ENCODE measurements at regions of chr5 and their contacts with region 1.

Region 1: GRCh38 chr5:150640311-150641005 is at the start of gene SYNPO:
- DNase-seq: peak; percentile 49
- H3K4me3 Mint-ChIP-seq: peak within 1 kb of the TSS; percentile 19
- H3K27ac Mint-ChIP-seq: peak within 1 kb of the TSS; percentile 58
- H3K4me1 Mint-ChIP-seq: peaks cover 74% of the 10 kb centered on the region
- H3K27me3 Mint-ChIP-seq: no peaks in the 10 kb centered on the region
- CTCF ChIP-seq: no peak
- total RNA-seq, gene SYNPO: 0.92 and 2.5 TPM in 2 replicates

Region 2: GRCh38 chr5:150398722-150399523 is 241.5 kb before region 1 on chr5:
- CTCF ChIA-PET with region 1: no interaction called
- intact Hi-C with region 1: no loop called
- DNase-seq: no peak
- H3K4me3 Mint-ChIP-seq: no peak overlapping the region
- H3K27ac Mint-ChIP-seq: no peak overlapping the region
- H3K4me1 Mint-ChIP-seq: no peaks in the 10 kb centered on the region
- H3K27me3 Mint-ChIP-seq: no peaks in the 10 kb centered on the region
- CTCF ChIP-seq: peak; percentile 47

Region 3: DNA sequence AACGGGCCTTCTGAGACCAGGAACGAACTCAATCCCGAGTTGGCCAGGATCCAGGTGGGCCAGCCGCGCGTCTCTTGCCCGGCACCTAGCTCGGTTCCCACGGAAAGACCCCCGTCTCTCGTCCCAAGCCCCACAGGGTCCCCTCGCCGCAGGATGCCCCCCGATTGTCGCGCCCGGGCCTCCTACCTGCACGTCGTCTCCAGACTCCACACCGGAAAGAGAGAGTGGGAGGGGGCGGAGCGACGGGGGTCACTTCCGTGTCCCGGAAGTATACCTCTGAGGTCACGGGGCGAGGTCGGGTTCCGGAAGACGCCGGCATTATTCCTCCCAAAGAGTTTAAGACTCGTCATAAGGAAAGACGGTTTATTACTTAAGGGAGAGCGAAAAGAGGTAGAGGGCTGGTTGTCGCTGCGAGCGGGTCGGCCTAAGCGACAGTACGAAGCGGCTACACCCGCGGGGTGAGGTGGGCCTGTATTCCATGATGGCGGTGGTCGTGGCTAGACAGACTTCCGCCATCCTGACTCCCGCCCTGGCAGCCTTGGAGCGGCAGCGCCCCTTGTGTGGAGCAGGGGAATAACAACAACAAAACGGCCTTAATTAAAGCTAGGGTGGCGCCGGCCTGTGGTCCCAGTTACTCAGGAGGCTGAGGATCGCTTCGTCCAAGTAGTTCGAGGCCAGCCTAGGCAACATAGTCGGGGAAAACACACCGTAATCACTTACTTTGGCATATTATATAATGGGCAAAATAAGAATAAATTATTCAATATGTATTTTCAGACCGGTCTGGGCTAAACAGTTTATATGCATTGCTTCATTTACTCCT is 190.7 kb before region 1 on chr5 and contains the start of gene RPS14:
- CTCF ChIA-PET with region 1: no interaction called
- intact Hi-C with region 1: loop called (anchors 10 kb)
- DNase-seq: peak; percentile 97
- H3K4me3 Mint-ChIP-seq: peak within 1 kb of the TSS; percentile 88
- H3K27ac Mint-ChIP-seq: peak within 1 kb of the TSS; percentile 98
- H3K4me1 Mint-ChIP-seq: peaks cover 28% of the 10 kb centered on the region
- H3K27me3 Mint-ChIP-seq: no peaks in the 10 kb centered on the region
- CTCF ChIP-seq: peak; percentile 94
- total RNA-seq, gene RPS14: 2,194 and 2,330 TPM in 2 replicates

Region 4: DNA sequence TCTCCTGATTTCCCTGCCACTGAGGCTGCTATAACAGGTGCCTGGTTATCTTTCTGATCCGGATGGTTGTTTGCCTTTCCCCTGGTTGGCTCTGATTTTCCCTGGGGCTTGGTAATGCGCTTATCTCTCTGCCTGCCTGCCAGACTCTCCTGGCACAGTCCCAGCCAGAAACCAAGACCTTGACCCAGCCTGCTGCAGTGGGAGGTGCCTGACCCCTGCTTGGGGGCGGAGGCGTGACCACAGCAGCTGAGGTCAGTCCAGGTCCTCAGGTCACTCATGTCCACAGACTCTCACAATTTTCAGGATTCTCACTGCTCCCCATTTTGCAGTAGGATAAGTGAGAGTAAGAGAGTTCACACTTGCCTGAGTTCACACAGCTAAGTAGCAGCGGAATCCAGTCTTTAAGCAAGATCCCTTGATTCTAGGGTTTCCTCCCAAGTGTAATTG is 24.4 kb before region 1 on chr5:
- CTCF ChIA-PET with region 1: no interaction called
- intact Hi-C with region 1: loop called (anchors 1 kb)
- DNase-seq: peak; percentile 71
- H3K4me3 Mint-ChIP-seq: no peak overlapping the region
- H3K27ac Mint-ChIP-seq: peak overlapping the region; percentile 2
- H3K4me1 Mint-ChIP-seq: peaks cover 53% of the 10 kb centered on the region
- H3K27me3 Mint-ChIP-seq: no peaks in the 10 kb centered on the region
- CTCF ChIP-seq: no peak

Region 5: DNA sequence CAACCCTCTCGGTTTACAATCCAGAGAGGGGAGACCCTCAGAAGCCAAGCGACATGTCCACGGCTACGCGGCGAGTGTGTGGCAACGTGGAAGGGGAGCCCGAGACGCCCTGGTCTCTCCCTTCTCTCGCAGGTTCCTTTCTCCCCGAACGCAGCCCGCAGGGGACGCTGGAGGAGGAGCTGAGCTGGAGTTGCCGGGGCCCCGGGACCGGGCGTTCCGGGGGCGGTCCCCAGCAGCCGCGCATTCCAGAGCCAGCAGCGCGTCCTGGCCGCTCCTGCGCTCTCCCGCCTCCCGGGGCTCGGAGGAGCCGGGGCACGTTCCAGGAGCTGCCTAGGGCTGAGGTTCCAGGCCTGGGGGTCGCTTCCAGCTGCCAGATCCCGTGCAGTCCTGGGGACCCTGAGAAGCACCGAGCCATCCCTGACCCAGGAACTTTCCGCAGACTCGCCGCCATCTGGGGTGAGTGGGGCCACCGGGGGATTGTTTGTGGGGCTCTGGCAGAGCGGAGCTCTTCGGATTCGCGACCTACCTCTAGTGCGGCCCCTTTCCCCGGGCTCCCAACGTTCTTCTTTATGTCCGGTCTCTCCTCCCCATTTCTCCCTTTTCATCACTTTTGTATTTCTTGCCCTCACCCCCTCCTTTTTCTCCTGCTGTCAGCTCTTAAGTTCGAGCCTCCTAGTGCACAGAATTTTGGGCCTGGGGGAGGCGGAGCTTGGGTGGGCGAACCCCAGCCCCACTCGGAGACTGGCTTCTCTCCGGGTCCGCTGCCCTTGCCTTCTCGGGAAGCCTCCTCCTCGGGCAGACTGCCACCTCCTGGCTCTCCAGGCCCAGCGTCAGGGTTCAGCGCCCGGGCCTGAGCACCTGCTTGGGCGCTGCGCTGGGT is 138.3 kb after region 1 on chr5 and contains the start of gene SMIM3:
- CTCF ChIA-PET with region 1: no interaction called
- intact Hi-C with region 1: no loop called
- DNase-seq: peak; percentile 83
- H3K4me3 Mint-ChIP-seq: peak within 1 kb of the TSS; percentile 98
- H3K27ac Mint-ChIP-seq: peak within 1 kb of the TSS; percentile 69
- H3K4me1 Mint-ChIP-seq: peaks cover 33% of the 10 kb centered on the region
- H3K27me3 Mint-ChIP-seq: no peaks in the 10 kb centered on the region
- CTCF ChIP-seq: no peak
- total RNA-seq, gene SMIM3: 6.9 and 8.4 TPM in 2 replicates

Region 6: DNA sequence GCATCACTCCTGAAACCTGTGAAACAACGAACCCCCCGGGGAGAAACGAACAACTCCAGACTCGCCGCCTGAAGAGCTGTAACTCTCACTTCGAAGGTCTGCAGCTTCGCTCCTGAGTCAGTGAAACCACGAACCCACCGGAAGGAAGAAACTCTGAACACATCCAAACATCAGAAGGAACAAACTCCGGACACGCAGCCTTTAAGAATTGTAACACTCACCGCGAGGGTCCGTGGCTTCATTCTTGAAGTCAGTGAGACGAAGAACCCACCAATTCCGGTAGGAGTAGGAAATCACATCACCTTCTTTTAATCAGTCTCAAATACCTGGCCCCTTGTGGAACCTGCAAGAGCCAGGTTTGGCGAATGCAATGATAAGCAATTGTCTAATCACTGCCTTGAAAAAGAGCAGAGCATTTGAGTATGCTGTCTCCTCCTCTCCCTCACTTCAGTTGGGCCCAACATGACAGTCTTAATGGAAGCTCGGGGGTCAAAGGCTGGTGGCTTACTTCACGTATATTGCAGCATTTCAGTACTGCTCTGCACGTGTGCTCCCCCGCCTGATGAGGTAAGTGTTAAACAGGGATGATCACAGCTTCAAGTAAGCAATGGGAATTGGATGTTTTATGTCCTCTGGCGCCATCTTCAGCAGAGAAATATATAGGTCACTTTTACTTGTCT is 206.3 kb after region 1 on chr5:
- CTCF ChIA-PET with region 1: no interaction called
- intact Hi-C with region 1: no loop called
- DNase-seq: peak; percentile 53
- H3K4me3 Mint-ChIP-seq: no peak overlapping the region
- H3K27ac Mint-ChIP-seq: no peak overlapping the region
- H3K4me1 Mint-ChIP-seq: no peaks in the 10 kb centered on the region
- H3K27me3 Mint-ChIP-seq: peaks cover 66% of the 10 kb centered on the region
- CTCF ChIP-seq: peak; percentile 50